ENCODE measurements at regions of chr16 and their contacts with region 1.

Region 1: DNA sequence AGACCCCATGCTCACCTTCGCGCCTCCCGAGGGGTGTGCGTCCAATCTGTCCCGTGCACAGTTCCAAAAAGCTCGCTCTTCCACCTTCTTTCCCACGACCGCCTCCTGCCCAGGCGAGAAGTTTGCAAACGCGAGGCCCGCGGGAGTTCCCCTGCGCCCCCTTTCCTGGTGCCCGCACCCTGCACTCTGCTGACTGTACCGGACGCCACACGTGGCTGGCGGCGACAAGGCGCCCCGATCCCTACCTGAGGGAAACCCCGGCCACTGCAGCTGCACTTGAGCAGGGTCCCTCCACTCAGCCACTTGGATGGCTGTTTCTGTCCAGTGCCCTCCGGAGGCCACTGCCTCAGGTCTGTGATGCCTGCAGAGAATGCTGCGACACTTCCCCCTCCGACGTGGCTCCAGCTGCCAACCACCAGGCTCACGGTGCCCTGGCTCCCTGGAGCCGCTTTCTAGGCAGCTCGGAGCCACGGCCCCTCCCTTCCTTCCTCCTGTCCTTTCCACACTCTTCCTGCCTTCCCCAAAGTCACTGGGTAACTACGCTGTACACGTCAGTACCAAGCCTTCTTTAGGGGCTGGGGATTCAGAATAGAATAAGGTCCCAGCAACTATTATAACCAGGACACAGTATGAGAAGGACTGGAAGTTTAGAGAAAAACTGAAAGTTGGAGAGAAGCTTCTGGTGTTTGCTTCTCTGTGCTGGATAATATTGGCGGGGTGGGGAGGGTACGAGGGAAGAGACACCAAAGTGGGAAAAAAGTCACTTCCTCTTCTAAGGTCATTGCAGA is at the start of gene MLKL:
- DNase-seq: peak; percentile 69
- H3K4me3 ChIP-seq: peak within 1 kb of the TSS; percentile 59 to 85 (median 82)
- H3K27ac ChIP-seq: peak within 1 kb of the TSS; percentile 82
- H3K4me1 ChIP-seq: peaks cover 23% of the 10 kb centered on the region
- H3K27me3 ChIP-seq: no peaks in the 10 kb centered on the region
- CTCF ChIP-seq: peak in 1 of 2 donors; percentile 15
- POLR2A ChIP-seq: peak; percentile 75
- total RNA-seq, gene MLKL: 24.4 and 26.5 TPM in 2 replicates

Region 2: DNA sequence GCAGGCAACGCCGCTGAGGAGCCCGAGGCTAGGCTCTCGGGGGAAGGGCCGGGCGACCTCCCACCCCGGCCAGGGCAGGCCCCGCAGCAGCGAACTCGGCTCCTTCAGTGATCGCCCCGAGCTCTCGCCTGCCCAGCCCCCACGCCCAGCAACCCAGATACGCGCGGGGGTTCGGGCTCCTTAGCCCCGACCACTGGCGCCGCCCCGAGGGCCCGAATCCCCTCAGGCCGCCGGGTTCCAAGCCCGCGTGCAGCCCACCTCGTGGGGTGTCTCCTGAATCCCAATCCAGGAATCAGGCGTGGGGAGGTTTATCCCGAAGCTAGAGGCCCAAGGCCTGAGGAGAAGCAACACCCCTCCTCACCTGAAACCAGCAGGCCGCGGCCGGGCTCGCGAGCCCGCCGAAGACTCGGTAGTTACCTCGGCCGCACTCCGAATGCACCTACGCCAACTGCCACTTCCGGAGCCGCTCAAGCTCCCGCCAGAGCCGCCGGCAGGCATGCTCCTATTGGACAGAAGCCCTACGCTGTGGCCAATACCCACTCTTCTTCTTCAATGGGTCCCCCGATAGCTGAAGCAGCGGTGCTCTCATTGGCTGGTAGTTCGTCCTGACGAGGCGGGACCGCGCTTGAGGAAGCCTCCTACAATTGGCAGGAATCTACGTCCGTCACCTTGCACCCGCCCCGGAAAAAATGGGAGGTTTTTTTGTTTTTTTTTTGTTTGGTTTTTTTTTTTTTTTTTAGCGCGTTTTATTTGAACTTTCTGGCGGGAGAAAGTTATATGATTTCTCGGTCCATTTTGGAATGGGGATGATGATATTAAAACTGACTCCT is 34.0 kb before region 1 on chr16 and contains the start of gene RFWD3:
- CTCF ChIA-PET with region 1: interaction called, 6 read pairs
- POLR2A ChIA-PET with region 1: interaction called, 3 read pairs
- dilution Hi-C with region 1: no loop called
- intact Hi-C with region 1: loop called (anchors 2 kb)
- DNase-seq: peak; percentile 98
- H3K4me3 ChIP-seq: peak within 1 kb of the TSS; percentile 84 to 95 (median 88)
- H3K27ac ChIP-seq: peak within 1 kb of the TSS; percentile 62
- H3K4me1 ChIP-seq: peaks cover 4% of the 10 kb centered on the region
- H3K27me3 ChIP-seq: no peaks in the 10 kb centered on the region
- CTCF ChIP-seq: peak in 1 of 2 donors; percentile 0
- POLR2A ChIP-seq: peak; percentile 88
- total RNA-seq, gene RFWD3: 47.6 and 51.6 TPM in 2 replicates